MCF 10A (cell line): ENCODE measurements at regions of chr5 and their contacts with region 1.

Region 1: GRCh38 chr5:97528941-97529340 is 345.9 kb upstream of the RIOK2 start:
- DNase-seq: peak; percentile 36
- H3K4me3 Mint-ChIP-seq: no peak overlapping the region
- H3K27ac Mint-ChIP-seq: no peak overlapping the region
- H3K4me1 Mint-ChIP-seq: peaks cover 17% of the 10 kb centered on the region
- H3K27me3 Mint-ChIP-seq: no peaks in the 10 kb centered on the region
- CTCF ChIP-seq: no peak

Region 2: GRCh38 chr5:97425511-97425910 is 103.4 kb before region 1 on chr5:
- CTCF ChIA-PET with region 1: interaction called, 7 read pairs
- POLR2A ChIA-PET with region 1: no interaction called
- intact Hi-C with region 1: loop called (anchors 1 kb)
- DNase-seq: peak; percentile 23
- H3K4me3 Mint-ChIP-seq: no peak overlapping the region
- H3K27ac Mint-ChIP-seq: no peak overlapping the region
- H3K4me1 Mint-ChIP-seq: no peaks in the 10 kb centered on the region
- H3K27me3 Mint-ChIP-seq: no peaks in the 10 kb centered on the region
- CTCF ChIP-seq: peak; percentile 17